ENCODE measurements at regions of chr7 and their contacts with region 1.

Region 1: GRCh38 chr7:137898839-137899721 is 52.3 kb upstream of the DGKI start:
- DNase-seq: peak; percentile 86
- H3K4me3 Mint-ChIP-seq: no peak overlapping the region
- H3K27ac Mint-ChIP-seq: no peak overlapping the region
- H3K4me1 Mint-ChIP-seq: peaks cover 23% of the 10 kb centered on the region
- H3K27me3 Mint-ChIP-seq: no peaks in the 10 kb centered on the region

Region 2: GRCh38 chr7:137606061-137606674 is 292.9 kb before region 1 on chr7:
- CTCF ChIA-PET with region 1: interaction called, 10 read pairs
- intact Hi-C with region 1: loop called (anchors 1 kb)
- DNase-seq: no peak
- H3K4me3 Mint-ChIP-seq: no peak overlapping the region
- H3K27ac Mint-ChIP-seq: no peak overlapping the region
- H3K4me1 Mint-ChIP-seq: no peaks in the 10 kb centered on the region
- H3K27me3 Mint-ChIP-seq: peaks cover 5% of the 10 kb centered on the region

Region 3: DNA sequence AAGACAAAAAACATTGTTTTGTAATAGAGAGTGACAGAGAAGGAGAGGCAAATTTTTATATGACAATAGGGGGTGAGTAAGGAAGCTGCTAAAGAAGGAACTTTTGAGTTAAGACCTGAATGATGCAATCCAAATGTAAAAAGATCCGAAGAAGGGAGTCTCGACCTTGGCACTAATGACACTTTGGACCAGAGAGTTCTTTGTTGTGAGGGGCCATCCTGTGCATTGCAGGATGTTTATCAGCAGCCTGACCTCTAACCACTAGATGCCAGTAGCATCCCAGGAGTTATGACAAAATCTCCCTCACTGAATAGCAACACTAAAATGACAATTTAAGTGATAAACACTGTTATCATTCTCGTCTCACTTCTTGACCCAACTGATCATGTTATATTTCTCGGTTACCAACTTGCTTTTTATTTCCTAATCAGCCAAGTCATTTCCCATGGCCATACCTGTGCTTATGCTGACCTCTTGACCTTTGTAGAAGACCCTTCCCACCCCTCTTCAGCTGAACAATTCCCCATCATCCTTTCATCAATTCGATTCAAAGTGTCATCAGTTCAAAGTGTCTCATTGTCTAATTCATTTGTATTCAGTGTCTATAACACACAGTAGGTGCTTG is 82.3 kb before region 1 on chr7:
- CTCF ChIA-PET with region 1: interaction called, 4 read pairs
- intact Hi-C with region 1: loop called (anchors 1 kb)
- DNase-seq: peak; percentile 4
- H3K4me3 Mint-ChIP-seq: no peak overlapping the region
- H3K27ac Mint-ChIP-seq: no peak overlapping the region
- H3K4me1 Mint-ChIP-seq: no peaks in the 10 kb centered on the region
- H3K27me3 Mint-ChIP-seq: peaks cover 20% of the 10 kb centered on the region

Region 4: GRCh38 chr7:137934941-137935883 is 36.1 kb after region 1 on chr7:
- CTCF ChIA-PET with region 1: interaction called, 4 read pairs
- intact Hi-C with region 1: loop called (anchors 1 kb)
- DNase-seq: no peak
- H3K4me3 Mint-ChIP-seq: peak overlapping the region; percentile 54
- H3K27ac Mint-ChIP-seq: peak overlapping the region; percentile 76
- H3K4me1 Mint-ChIP-seq: peaks cover 44% of the 10 kb centered on the region
- H3K27me3 Mint-ChIP-seq: no peaks in the 10 kb centered on the region

Region 5: GRCh38 chr7:137953665-137954470 is 54.8 kb after region 1 on chr7:
- CTCF ChIA-PET with region 1: no interaction called
- intact Hi-C with region 1: no loop called
- DNase-seq: no peak
- H3K4me3 Mint-ChIP-seq: no peak overlapping the region
- H3K27ac Mint-ChIP-seq: no peak overlapping the region
- H3K4me1 Mint-ChIP-seq: peaks cover 8% of the 10 kb centered on the region
- H3K27me3 Mint-ChIP-seq: no peaks in the 10 kb centered on the region

Region 6: GRCh38 chr7:138015096-138015495 is 116.0 kb after region 1 on chr7:
- CTCF ChIA-PET with region 1: interaction called, 283 read pairs
- intact Hi-C with region 1: no loop called
- DNase-seq: no peak
- H3K4me3 Mint-ChIP-seq: no peak overlapping the region
- H3K27ac Mint-ChIP-seq: no peak overlapping the region
- H3K4me1 Mint-ChIP-seq: no peaks in the 10 kb centered on the region
- H3K27me3 Mint-ChIP-seq: no peaks in the 10 kb centered on the region

Region 7: GRCh38 chr7:138865843-138866242 is 966.8 kb after region 1 on chr7:
- CTCF ChIA-PET with region 1: no interaction called
- intact Hi-C with region 1: loop called (anchors 2 kb)
- DNase-seq: peak; percentile 67
- H3K4me3 Mint-ChIP-seq: no peak overlapping the region
- H3K27ac Mint-ChIP-seq: no peak overlapping the region
- H3K4me1 Mint-ChIP-seq: peaks cover 19% of the 10 kb centered on the region
- H3K27me3 Mint-ChIP-seq: no peaks in the 10 kb centered on the region